ENCODE measurements at regions of chr12 and their contacts with region 1.

Region 1: GRCh38 chr12:125683748-125684381 is 618.6 kb downstream of the AACS start:
- DNase-seq: peak in 7 of 10 donors; percentile 6 to 62 (median 36)
- H3K4me3 ChIP-seq: no peak overlapping the region
- H3K27ac ChIP-seq: no peak overlapping the region
- H3K27me3 ChIP-seq: peaks cover 0 to 20% (median 3%) of the 10 kb centered on the region in 45 donors
- CTCF ChIP-seq: peak in 55 of 56 donors; percentile 12 to 71 (median 57)

Region 2: DNA sequence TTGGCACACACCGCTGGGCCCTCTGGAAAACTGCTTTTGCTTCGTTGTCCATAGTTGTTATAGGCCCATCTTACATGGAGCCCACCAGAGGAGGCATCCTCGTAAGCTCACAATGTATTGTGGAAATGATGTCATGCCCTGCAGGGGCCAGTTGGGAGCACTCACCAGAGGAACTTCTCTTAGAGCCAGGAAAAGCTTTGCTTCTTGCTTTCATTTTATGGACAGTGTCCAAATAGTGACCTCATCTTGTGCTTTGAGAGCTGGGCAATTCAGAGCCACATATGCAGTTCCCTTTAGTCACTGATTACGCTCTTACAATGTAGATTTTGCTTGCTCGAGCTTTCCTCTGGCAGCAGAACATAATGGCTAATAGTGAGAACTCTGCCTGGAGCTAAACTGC is 343.1 kb before region 1 on chr12:
- intact Hi-C with region 1: loop called (anchors 5 to 10 kb)
- DNase-seq: peak in 2 of 10 donors; percentile 27 to 33
- H3K4me3 ChIP-seq: peak overlapping the region in 4 of 59 donors; percentile 2 to 26 (median 5)
- H3K27ac ChIP-seq: peak overlapping the region in 51 of 59 donors; percentile 4 to 81 (median 59)
- H3K27me3 ChIP-seq: no peaks in the 10 kb centered on the region
- CTCF ChIP-seq: peak in 16 of 56 donors; percentile 7 to 31 (median 17)

Region 3: GRCh38 chr12:125346362-125346761 is 337.5 kb before region 1 on chr12:
- intact Hi-C with region 1: loop called (anchors 5 to 10 kb)
- DNase-seq: peak in 6 of 10 donors; percentile 40 to 67 (median 53)
- H3K4me3 ChIP-seq: no peak overlapping the region
- H3K27ac ChIP-seq: peak overlapping the region in 9 of 59 donors; percentile 10 to 68 (median 37)
- H3K27me3 ChIP-seq: no peaks in the 10 kb centered on the region
- CTCF ChIP-seq: peak in 55 of 56 donors; percentile 32 to 75 (median 59)

Region 4: GRCh38 chr12:125538401-125539199 is 145.3 kb before region 1 on chr12:
- intact Hi-C with region 1: loop called in 1 of 2 experiments (anchors 5 kb)
- DNase-seq: no peak
- H3K4me3 ChIP-seq: no peak overlapping the region
- H3K27ac ChIP-seq: peak overlapping the region in 11 of 59 donors; percentile 2 to 68 (median 29)
- H3K27me3 ChIP-seq: no peaks in the 10 kb centered on the region
- CTCF ChIP-seq: no peak

Measured in dorsolateral prefrontal cortex (tissue), 120 donors.